ENCODE measurements at regions of chr9 and their contacts with region 1.

Region 1: GRCh38 chr9:88197781-88198340 is 59.6 kb upstream of the SPATA31C2 start:
- DNase-seq: peak; percentile 61
- H3K4me3 ChIP-seq: no peak overlapping the region
- H3K27ac ChIP-seq: peak overlapping the region; percentile 36
- H3K4me1 ChIP-seq: peaks cover 21% of the 10 kb centered on the region
- H3K27me3 ChIP-seq: no peaks in the 10 kb centered on the region
- CTCF ChIP-seq: no peak

Region 2: GRCh38 chr9:88076286-88077090 is 121.4 kb before region 1 on chr9:
- CTCF ChIA-PET with region 1: no interaction called
- dilution Hi-C with region 1: loop called (anchors 25 kb)
- in situ Hi-C with region 1: no loop called
- intact Hi-C with region 1: no loop called
- DNase-seq: peak; percentile 95
- H3K4me3 ChIP-seq: peak overlapping the region; percentile 48 to 70 (median 58)
- H3K27ac ChIP-seq: peak overlapping the region; percentile 85
- H3K4me1 ChIP-seq: peaks cover 14% of the 10 kb centered on the region
- H3K27me3 ChIP-seq: no peaks in the 10 kb centered on the region
- CTCF ChIP-seq: peak in 1 of 2 donors; percentile 43

Region 3: GRCh38 chr9:88272986-88273385 is 75.1 kb after region 1 on chr9:
- CTCF ChIA-PET with region 1: no interaction called
- dilution Hi-C with region 1: no loop called
- in situ Hi-C with region 1: no loop called
- intact Hi-C with region 1: loop called (anchors 1 kb)
- DNase-seq: no peak
- H3K4me3 ChIP-seq: no peak overlapping the region
- H3K27ac ChIP-seq: no peak overlapping the region
- H3K4me1 ChIP-seq: peaks cover 16% of the 10 kb centered on the region
- H3K27me3 ChIP-seq: no peaks in the 10 kb centered on the region
- CTCF ChIP-seq: no peak

Region 4: GRCh38 chr9:88874383-88874782 is 676.5 kb after region 1 on chr9:
- CTCF ChIA-PET with region 1: no interaction called
- dilution Hi-C with region 1: no loop called
- in situ Hi-C with region 1: no loop called
- intact Hi-C with region 1: no loop called
- DNase-seq: no peak
- H3K4me3 ChIP-seq: no peak overlapping the region
- H3K27ac ChIP-seq: no peak overlapping the region
- H3K4me1 ChIP-seq: peaks cover 2% of the 10 kb centered on the region
- H3K27me3 ChIP-seq: no peaks in the 10 kb centered on the region
- CTCF ChIP-seq: peak in 1 of 2 donors; percentile 3